ENCODE measurements at regions of chr6 and their contacts with region 1.

Region 1: DNA sequence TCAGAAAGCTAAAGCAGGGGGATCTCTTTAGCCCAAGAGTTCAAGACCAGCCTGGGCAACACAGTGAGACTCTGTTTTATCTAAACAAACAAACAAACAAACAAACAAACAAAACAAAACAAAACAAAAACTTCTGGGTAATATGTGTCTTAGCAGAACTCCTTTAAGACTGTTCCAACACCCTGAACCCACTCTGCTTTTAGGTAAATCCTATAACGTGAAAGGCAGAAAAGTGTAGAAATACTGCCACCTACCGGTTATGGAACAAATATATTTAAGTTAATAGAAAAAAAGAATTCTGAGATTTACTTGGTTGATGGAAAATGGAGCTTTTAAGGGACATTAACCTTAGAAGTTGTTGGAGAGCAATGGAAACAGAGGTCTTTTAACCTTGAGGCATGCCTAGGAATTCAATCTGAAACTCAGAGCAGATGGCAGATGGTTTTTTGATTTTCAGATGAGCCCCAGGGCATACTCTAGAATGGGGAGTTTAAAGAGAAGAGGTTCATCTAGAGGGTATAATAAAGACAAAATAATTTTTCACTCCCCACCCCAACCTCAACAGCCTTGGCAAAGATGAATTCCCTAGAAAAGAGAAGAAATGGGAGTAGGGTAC is 38.5 kb downstream of the SOD2 start:
- DNase-seq: peak; percentile 24
- H3K4me3 Mint-ChIP-seq: no peak overlapping the region
- H3K27ac Mint-ChIP-seq: no peak overlapping the region
- H3K4me1 Mint-ChIP-seq: no peaks in the 10 kb centered on the region
- H3K27me3 Mint-ChIP-seq: no peaks in the 10 kb centered on the region
- CTCF ChIP-seq: peak; percentile 55

Region 2: DNA sequence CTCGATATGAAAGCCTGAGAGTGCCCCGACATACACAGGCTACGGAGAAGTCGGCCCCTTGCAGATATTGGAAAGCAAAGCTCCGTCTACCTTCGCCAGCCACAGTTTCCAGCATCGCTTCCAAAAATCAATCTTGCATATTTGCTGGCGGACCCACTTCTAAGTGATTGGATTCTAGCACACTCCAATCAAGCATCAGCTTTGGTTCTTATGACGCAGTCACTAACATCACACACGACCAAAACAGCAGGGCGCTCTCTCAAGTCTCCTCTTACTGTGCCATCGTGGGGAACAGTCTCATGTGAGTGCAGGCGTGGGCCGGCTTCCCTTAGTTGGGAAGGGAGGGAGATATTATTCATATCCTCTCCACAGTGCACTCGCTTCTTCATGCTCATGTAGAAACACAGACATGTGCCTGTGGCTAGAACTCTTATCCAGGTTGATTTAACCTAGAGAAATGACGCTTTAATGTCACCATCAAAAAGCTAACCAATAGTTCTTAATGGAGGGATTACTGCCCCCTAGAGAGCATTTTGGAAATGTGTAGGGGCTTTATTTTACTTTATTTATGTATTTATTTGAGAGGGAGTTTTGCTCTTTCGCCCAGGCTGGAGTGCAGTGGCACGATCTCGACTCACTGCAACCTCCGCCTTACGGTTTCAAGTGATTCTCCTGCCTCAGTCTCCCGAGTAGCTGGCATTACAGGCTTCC is 191.3 kb before region 1 on chr6:
- CTCF ChIA-PET with region 1: interaction called, 3 read pairs
- intact Hi-C with region 1: loop called (anchors 5 kb)
- DNase-seq: no peak
- H3K4me3 Mint-ChIP-seq: no peak overlapping the region
- H3K27ac Mint-ChIP-seq: no peak overlapping the region
- H3K4me1 Mint-ChIP-seq: no peaks in the 10 kb centered on the region
- H3K27me3 Mint-ChIP-seq: peaks cover 19% of the 10 kb centered on the region
- CTCF ChIP-seq: peak; percentile 13

Region 3: GRCh38 chr6:159577564-159577963 is 77.0 kb before region 1 on chr6:
- CTCF ChIA-PET with region 1: no interaction called
- intact Hi-C with region 1: no loop called
- DNase-seq: peak; percentile 63
- H3K4me3 Mint-ChIP-seq: no peak overlapping the region
- H3K27ac Mint-ChIP-seq: peak overlapping the region; percentile 76
- H3K4me1 Mint-ChIP-seq: peaks cover 17% of the 10 kb centered on the region
- H3K27me3 Mint-ChIP-seq: no peaks in the 10 kb centered on the region
- CTCF ChIP-seq: no peak